Left cardiac atrium (tissue), 4 donors: ENCODE measurements at regions of chr20 and their contacts with region 1.

Region 1: DNA sequence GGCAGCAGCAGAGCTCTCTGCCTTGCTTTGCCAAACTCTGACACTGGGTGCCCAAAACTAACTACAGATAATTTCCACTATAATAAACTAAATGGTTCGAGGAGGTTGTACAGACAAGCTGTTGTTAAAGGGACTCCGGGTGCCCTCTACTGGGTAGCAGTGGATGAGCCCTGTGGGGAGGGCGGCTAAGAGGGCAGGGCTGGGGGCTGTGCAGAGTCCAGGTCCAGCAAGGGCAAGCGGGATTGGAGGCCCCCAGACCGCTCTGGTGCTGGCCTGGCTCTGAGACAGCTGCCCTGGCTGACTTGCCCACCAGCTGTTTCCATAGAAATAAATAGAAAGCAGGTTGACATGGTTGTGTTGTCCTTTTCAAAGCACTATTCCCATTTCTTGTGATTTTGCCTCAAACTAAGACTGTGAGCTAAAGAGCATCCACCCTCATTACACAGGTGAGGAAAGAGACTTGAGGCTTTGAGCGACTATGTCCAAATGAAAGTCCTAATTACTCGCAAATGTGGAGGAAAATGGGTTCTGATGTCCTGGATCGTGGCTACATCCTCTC is 167.6 kb upstream of the CST7 start:
- DNase-seq: no peak
- ATAC-seq: peak; percentile 73 to 79

Region 2: DNA sequence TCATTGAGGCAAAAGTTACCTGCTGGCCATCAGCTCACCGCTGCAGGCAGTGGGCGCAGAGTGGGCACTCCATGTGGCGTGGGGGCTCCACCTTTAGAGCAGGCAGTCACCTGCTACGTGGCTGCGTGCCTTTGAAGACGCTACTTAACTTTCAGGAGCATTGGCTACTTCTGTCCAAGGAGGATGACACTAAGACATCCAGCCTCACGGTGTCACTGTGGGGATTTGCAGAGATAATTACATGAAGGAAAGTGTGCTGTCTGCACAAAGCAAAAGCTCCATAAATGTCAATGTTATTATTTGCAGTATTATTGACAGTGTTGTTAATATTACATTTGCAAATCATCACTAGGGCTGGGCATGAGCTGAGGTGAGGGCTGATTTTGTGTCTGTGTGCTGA is 478.1 kb before region 1 on chr20:
- intact Hi-C with region 1: loop called in 1 of 2 experiments (anchors 5 kb)
- DNase-seq: peak; percentile 24
- ATAC-seq: peak; percentile 41 to 44